Endothelial cell of umbilical vein (primary cell): ENCODE measurements at regions of chr11 and their contacts with region 1.

Region 1: GRCh38 chr11:19076744-19077589 is 16.4 kb upstream of the MRGPRX2 start:
- DNase-seq: peak; percentile 75
- H3K4me3 ChIP-seq: no peak overlapping the region
- H3K27ac ChIP-seq: peak overlapping the region; percentile 83
- H3K4me1 ChIP-seq: peaks cover 45% of the 10 kb centered on the region
- H3K27me3 ChIP-seq: no peaks in the 10 kb centered on the region
- CTCF ChIP-seq: peak; percentile 94 to 97
- POLR2A ChIP-seq: no peak

Region 2: GRCh38 chr11:19053909-19054308 is 23.1 kb before region 1 on chr11:
- CTCF ChIA-PET with region 1: no interaction called
- POLR2A ChIA-PET with region 1: no interaction called
- dilution Hi-C with region 1: no loop called
- intact Hi-C with region 1: no loop called
- DNase-seq: no peak
- H3K4me3 ChIP-seq: no peak overlapping the region
- H3K27ac ChIP-seq: no peak overlapping the region
- H3K4me1 ChIP-seq: no peaks in the 10 kb centered on the region
- H3K27me3 ChIP-seq: peaks cover 18 to 26% of the 10 kb centered on the region in 2 experiments
- CTCF ChIP-seq: no peak
- POLR2A ChIP-seq: no peak

Region 3: DNA sequence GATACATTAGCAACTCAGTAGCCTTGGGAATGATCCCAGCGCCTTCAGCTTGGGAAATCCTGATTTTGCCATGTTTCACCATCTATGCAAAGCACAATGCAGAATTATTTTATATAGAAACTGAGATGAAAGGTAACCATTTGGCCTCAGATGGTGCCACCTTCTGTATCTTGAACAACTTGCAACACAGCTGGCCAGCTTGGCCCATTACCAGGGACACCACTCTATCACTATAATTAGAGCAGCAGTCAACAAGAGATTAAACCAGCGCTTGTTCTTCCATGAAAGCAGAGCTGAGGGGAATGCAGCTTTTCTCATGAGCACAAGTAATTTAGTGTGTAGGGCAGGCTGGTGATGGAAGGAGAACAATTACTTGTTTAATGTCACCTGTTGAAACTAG is 33.3 kb after region 1 on chr11:
- CTCF ChIA-PET with region 1: interaction called, 121 read pairs
- POLR2A ChIA-PET with region 1: interaction called, 4 read pairs
- dilution Hi-C with region 1: no loop called
- intact Hi-C with region 1: no loop called
- DNase-seq: peak; percentile 24
- H3K4me3 ChIP-seq: no peak overlapping the region
- H3K27ac ChIP-seq: no peak overlapping the region
- H3K4me1 ChIP-seq: peaks cover 7% of the 10 kb centered on the region
- H3K27me3 ChIP-seq: no peaks in the 10 kb centered on the region
- CTCF ChIP-seq: no peak
- POLR2A ChIP-seq: no peak

Region 4: DNA sequence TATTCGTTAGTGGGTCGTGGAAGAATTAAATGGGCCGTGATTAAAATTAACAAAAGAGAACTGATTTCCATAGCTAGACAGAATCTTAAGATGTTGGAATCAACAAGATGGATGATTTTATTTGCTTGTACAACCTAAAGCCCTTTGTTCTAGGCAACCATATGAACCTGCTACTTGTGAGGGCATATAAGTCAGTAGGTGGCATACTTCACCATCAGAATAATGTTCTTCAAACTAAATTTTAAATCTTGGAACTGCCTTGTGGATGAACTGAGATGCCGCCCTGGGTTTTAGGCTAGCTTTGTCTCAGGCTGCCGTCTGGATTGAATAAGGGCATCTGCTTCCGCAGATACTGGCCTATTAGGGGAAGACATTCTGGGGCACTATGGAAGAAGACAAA is 83.9 kb after region 1 on chr11:
- CTCF ChIA-PET with region 1: interaction called, 105 read pairs
- POLR2A ChIA-PET with region 1: no interaction called
- dilution Hi-C with region 1: no loop called
- intact Hi-C with region 1: no loop called
- DNase-seq: peak; percentile 16
- H3K4me3 ChIP-seq: no peak overlapping the region
- H3K27ac ChIP-seq: no peak overlapping the region
- H3K4me1 ChIP-seq: no peaks in the 10 kb centered on the region
- H3K27me3 ChIP-seq: no peaks in the 10 kb centered on the region
- CTCF ChIP-seq: no peak
- POLR2A ChIP-seq: no peak

Region 5: DNA sequence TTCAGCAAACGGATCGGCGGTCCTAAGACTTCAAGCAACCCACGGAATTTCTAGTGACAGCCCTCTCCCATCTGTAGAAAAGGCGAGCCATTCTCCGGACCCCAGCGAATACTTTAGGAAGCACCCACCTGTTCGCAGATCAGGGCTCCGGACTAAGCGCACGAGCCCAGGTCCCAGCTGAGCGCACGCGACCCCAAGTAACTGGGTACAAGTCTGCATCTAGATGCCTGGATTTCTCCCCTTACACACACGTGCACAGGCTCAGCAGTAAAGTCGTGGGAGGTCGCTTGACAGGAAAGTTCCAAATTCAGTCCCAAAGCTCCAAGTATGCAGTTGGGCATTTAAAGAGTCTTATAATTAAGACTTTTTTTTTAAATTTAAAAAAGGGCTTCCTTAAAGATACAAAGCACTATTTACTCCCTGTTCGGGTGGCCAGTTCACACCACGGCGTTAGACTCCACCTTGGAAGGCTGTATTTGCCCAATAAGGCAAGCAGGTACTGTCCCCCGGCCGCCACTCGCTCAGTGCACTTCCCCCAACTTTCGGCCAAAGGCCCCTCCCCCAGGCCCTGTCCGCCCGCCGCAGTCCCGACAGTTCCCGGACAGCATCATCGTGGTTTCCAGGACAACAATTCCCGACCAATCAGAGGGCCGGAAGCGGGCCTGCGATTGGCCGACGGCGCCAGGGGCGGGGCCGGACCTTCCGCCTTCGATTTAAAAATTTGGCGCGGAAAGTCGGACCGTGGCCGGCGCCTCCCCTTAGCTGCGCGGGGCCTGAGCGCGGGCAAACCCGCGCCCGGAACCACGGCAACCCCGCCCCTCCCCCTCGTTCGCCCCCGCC is 163.7 kb after region 1 on chr11 and contains the start of gene E2F8:
- CTCF ChIA-PET with region 1: interaction called, 15 read pairs
- POLR2A ChIA-PET with region 1: no interaction called
- dilution Hi-C with region 1: no loop called
- intact Hi-C with region 1: no loop called
- DNase-seq: peak; percentile 96
- H3K4me3 ChIP-seq: peak within 1 kb of the TSS; percentile 88 to 92 (median 88)
- H3K27ac ChIP-seq: peak within 1 kb of the TSS; percentile 44
- H3K4me1 ChIP-seq: peaks cover 22% of the 10 kb centered on the region
- H3K27me3 ChIP-seq: no peaks in the 10 kb centered on the region
- CTCF ChIP-seq: no peak
- POLR2A ChIP-seq: peak; percentile 41
- total RNA-seq, gene E2F8: 16.5 and 19.1 TPM in 2 replicates

Region 6: GRCh38 chr11:19370100-19370861 is 293.3 kb after region 1 on chr11:
- CTCF ChIA-PET with region 1: no interaction called
- POLR2A ChIA-PET with region 1: no interaction called
- dilution Hi-C with region 1: no loop called
- intact Hi-C with region 1: loop called (anchors 2 kb)
- DNase-seq: peak; percentile 94
- H3K4me3 ChIP-seq: peak overlapping the region in 1 of 3 experiments; percentile 28
- H3K27ac ChIP-seq: peak overlapping the region; percentile 91
- H3K4me1 ChIP-seq: peaks cover 83% of the 10 kb centered on the region
- H3K27me3 ChIP-seq: no peaks in the 10 kb centered on the region
- CTCF ChIP-seq: no peak
- POLR2A ChIP-seq: no peak